ENCODE measurements at regions of chr14 and their contacts with region 1.

Region 1: GRCh38 chr14:65019944-65020566 is 33.4 kb downstream of the FNTB start:
- DNase-seq: peak; percentile 81 to 86 (median 85)
- H3K4me3 ChIP-seq: no peak overlapping the region
- H3K27ac ChIP-seq: no peak overlapping the region
- H3K4me1 ChIP-seq: peaks cover 0 to 5% (median 2%) of the 10 kb centered on the region in 4 experiments
- H3K27me3 ChIP-seq: no peaks in the 10 kb centered on the region

Region 2: GRCh38 chr14:64986578-64987571 is 33.2 kb before region 1 on chr14 and contains the start of gene FNTB:
- CTCF ChIA-PET with region 1: interaction called, 236 read pairs
- POLR2A ChIA-PET with region 1: interaction called, 4 read pairs
- DNase-seq: peak; percentile 97 to 99 (median 98)
- H3K4me3 ChIP-seq: peak within 1 kb of the TSS; percentile 85 to 97 (median 93)
- H3K27ac ChIP-seq: peak within 1 kb of the TSS; percentile 36 to 77
- H3K4me1 ChIP-seq: peaks cover 9 to 54% (median 36%) of the 10 kb centered on the region in 4 experiments
- H3K27me3 ChIP-seq: no peaks in the 10 kb centered on the region

Region 3: DNA sequence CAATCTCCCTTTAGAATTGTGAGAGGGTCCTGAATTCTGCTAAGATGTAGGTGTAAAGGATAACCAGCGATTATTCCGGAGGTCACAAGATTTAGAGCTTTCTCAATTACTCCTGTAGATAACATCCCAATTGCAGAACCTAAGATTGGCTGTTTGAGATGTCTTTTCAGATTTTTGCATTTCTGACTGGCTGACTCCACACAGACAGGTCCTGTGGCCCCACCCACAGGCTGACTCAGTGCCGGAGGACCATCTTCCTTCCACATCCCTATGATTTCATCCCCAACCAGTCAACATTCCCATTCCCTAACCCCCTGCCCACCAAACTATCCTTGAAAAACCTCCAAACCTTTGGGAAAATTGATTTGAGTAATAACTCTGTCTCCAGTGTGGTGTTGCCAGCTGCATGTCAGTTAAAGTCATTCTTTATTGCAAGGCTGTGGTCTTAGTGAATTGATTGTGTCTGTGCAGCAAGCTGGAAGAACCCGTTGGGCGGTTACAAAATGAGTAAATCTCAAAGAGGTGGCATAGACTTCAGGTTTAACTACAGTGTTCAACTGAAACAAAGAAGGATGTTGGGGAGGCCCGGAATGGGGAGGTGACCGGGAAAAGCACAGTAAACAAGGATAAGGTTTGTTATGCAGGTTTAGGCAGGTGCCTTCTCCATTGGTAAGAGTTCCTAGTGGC is 22.8 kb before region 1 on chr14:
- CTCF ChIA-PET with region 1: interaction called, 236 read pairs
- POLR2A ChIA-PET with region 1: interaction called, 3 read pairs
- DNase-seq: no peak
- H3K4me3 ChIP-seq: no peak overlapping the region
- H3K27ac ChIP-seq: no peak overlapping the region
- H3K4me1 ChIP-seq: peaks cover 11 to 20% (median 18%) of the 10 kb centered on the region in 4 experiments
- H3K27me3 ChIP-seq: no peaks in the 10 kb centered on the region

Region 4: GRCh38 chr14:65035049-65035448 is 15.0 kb after region 1 on chr14:
- CTCF ChIA-PET with region 1: interaction called, 18 read pairs
- POLR2A ChIA-PET with region 1: no interaction called
- DNase-seq: no peak
- H3K4me3 ChIP-seq: no peak overlapping the region
- H3K27ac ChIP-seq: no peak overlapping the region
- H3K4me1 ChIP-seq: peaks cover 0 to 3% (median 1%) of the 10 kb centered on the region in 4 experiments
- H3K27me3 ChIP-seq: no peaks in the 10 kb centered on the region

Region 5: DNA sequence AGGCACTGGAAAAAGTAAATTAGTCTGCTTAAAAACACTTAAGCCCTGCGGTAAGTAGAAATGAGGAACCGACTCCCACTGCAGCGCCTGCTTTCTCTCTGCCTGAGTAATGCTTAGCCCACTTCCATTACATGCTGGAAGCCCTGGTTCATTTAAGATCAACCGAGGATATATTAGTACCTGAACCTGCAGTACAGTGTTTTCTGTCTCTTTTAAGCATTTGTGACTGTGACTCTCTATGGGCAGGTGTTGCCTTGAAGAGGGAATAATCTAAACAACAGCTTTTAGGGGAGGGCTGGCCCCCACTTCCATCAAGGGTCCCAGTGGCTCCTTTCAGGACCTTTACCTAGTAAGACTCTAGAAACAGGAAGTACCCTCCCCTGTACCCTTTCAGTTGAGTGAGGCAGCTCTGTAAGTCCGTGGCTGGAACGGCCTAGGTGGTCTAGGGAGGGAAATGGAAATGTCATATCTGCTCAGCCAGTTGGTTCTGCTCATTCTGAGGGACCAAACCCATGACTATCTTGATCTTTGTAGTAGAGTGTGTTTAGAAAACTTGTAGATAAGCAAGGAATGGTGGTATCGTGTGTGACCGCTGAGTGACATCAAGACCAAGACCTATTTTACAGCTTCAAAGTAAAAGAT is 22.8 kb after region 1 on chr14:
- CTCF ChIA-PET with region 1: interaction called, 18 read pairs
- POLR2A ChIA-PET with region 1: interaction called, 3 read pairs
- DNase-seq: peak; percentile 84 to 98 (median 94)
- H3K4me3 ChIP-seq: peak overlapping the region in 3 of 7 experiments; percentile 22 to 57 (median 42)
- H3K27ac ChIP-seq: peak overlapping the region; percentile 80 to 84
- H3K4me1 ChIP-seq: peaks cover 17 to 67% (median 49%) of the 10 kb centered on the region in 4 experiments
- H3K27me3 ChIP-seq: no peaks in the 10 kb centered on the region

Region 6: GRCh38 chr14:65054471-65055085 is 34.5 kb after region 1 on chr14:
- CTCF ChIA-PET with region 1: interaction called, 16 read pairs
- POLR2A ChIA-PET with region 1: no interaction called
- DNase-seq: peak; percentile 58 to 94 (median 87)
- H3K4me3 ChIP-seq: no peak overlapping the region
- H3K27ac ChIP-seq: peak overlapping the region in 1 of 2 experiments; percentile 63
- H3K4me1 ChIP-seq: peaks cover 3 to 40% (median 25%) of the 10 kb centered on the region in 4 experiments
- H3K27me3 ChIP-seq: no peaks in the 10 kb centered on the region

Measured in common myeloid progenitor, CD34-positive (primary cell).